ENCODE measurements at regions of chr2 and their contacts with region 1.

Region 1: GRCh38 chr2:240434728-240435456 is 571 bp upstream of the GPC1 start:
- DNase-seq: peak; percentile 90 to 91
- ATAC-seq: peak; percentile 39 to 51
- H3K4me3 ChIP-seq: peak overlapping the region; percentile 90
- H3K27ac ChIP-seq: peak overlapping the region; percentile 97 to 99
- H3K4me1 ChIP-seq: peaks cover 48% of the 10 kb centered on the region
- CTCF ChIP-seq: no peak
- EP300 ChIP-seq: peak in 1 of 2 experiments; percentile 31; a peak in 1 of 5 replicates
- POLR2A ChIP-seq: peak; percentile 60
- RAD21 ChIP-seq: 0 out of 5 replicates have a peak, but pooled peaks of 1 of the 2 experiments have one; percentile 11

Region 2: GRCh38 chr2:240149943-240150784 is 284.7 kb before region 1 on chr2:
- CTCF ChIA-PET with region 1: interaction called, 12 read pairs
- POLR2A ChIA-PET with region 1: no interaction called
- DNase-seq: peak; percentile 47 to 71
- ATAC-seq: peak; percentile 65 to 86
- H3K4me3 ChIP-seq: no peak overlapping the region
- H3K27ac ChIP-seq: no peak overlapping the region
- H3K4me1 ChIP-seq: no peaks in the 10 kb centered on the region
- CTCF ChIP-seq: peak; percentile 69
- EP300 ChIP-seq: no peak
- POLR2A ChIP-seq: no peak
- RAD21 ChIP-seq: peak; percentile 73 to 75

Region 3: DNA sequence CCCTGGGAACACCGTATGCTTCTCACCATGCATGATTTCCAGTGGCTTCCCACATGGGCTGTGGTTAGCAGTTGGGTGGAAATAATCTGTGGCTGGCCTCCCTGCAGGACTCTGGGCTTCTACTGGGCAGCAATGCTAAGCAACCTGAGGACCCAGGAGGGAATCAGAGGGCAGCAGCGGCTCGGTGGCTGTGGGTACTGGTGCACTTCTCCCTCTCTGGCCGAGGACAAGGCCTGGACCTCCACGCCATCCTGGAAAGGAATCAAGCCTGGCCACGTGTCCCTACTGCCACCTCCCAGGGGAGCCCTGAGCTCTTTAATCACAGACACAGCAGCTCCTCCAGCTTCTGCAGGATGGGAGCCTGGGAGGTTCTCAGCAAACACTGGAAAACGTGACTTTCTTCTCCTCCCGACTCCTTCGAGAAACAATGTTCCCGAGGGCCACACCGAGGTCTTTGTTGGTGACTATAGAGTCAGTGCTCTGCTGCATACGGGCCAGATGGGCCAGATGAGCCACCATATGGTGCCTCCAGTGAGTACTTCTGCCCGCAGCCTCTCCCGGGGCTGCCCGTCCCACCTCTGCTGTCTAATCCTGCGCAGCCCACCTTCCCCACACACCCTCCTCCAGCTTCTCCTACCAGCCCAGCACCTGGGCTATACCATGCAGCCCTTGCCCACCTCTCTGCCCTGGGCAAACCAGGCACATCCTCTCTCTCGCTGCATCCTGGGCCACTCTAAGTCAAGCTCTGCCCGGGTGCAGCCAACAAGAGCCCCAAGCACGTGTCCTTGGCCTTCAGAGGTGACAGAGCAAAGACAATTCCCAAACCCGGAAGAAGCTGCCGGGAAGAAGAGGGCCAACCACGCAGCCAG is 251.7 kb before region 1 on chr2:
- CTCF ChIA-PET with region 1: no interaction called
- POLR2A ChIA-PET with region 1: no interaction called
- DNase-seq: no peak
- ATAC-seq: no peak
- H3K4me3 ChIP-seq: no peak overlapping the region
- H3K27ac ChIP-seq: no peak overlapping the region
- H3K4me1 ChIP-seq: no peaks in the 10 kb centered on the region
- CTCF ChIP-seq: no peak
- EP300 ChIP-seq: no peak
- POLR2A ChIP-seq: no peak
- RAD21 ChIP-seq: no peak

Region 4: GRCh38 chr2:240369801-240370585 is 64.9 kb before region 1 on chr2:
- CTCF ChIA-PET with region 1: interaction called, 10 read pairs
- POLR2A ChIA-PET with region 1: interaction called, 22 read pairs
- DNase-seq: peak; percentile 95
- ATAC-seq: peak; percentile 77 to 84
- H3K4me3 ChIP-seq: no peak overlapping the region
- H3K27ac ChIP-seq: peak overlapping the region; percentile 92 to 97
- H3K4me1 ChIP-seq: peaks cover 68% of the 10 kb centered on the region
- CTCF ChIP-seq: peak; percentile 12; the same call in 1 of the 3 replicates
- EP300 ChIP-seq: peak; percentile 43 to 69; a peak in 2 of 5 replicates
- POLR2A ChIP-seq: peak; percentile 8; the same call in 1 of the 2 replicates
- RAD21 ChIP-seq: peak in 1 of 2 experiments; percentile 40; a peak in 2 of 5 replicates

Region 5: GRCh38 chr2:240387669-240388358 is 47.1 kb before region 1 on chr2:
- CTCF ChIA-PET with region 1: interaction called, 15 read pairs
- POLR2A ChIA-PET with region 1: interaction called, 9 read pairs
- DNase-seq: peak; percentile 90 to 96
- ATAC-seq: peak; percentile 70 to 81
- H3K4me3 ChIP-seq: peak overlapping the region; percentile 39
- H3K27ac ChIP-seq: peak overlapping the region; percentile 99 to 100
- H3K4me1 ChIP-seq: peaks cover 45% of the 10 kb centered on the region
- CTCF ChIP-seq: no peak
- EP300 ChIP-seq: peak; percentile 62 to 77; a peak in 3 of 5 replicates
- POLR2A ChIP-seq: no peak
- RAD21 ChIP-seq: peak in 1 of 2 experiments; percentile 31; a peak in 2 of 5 replicates

Region 6: DNA sequence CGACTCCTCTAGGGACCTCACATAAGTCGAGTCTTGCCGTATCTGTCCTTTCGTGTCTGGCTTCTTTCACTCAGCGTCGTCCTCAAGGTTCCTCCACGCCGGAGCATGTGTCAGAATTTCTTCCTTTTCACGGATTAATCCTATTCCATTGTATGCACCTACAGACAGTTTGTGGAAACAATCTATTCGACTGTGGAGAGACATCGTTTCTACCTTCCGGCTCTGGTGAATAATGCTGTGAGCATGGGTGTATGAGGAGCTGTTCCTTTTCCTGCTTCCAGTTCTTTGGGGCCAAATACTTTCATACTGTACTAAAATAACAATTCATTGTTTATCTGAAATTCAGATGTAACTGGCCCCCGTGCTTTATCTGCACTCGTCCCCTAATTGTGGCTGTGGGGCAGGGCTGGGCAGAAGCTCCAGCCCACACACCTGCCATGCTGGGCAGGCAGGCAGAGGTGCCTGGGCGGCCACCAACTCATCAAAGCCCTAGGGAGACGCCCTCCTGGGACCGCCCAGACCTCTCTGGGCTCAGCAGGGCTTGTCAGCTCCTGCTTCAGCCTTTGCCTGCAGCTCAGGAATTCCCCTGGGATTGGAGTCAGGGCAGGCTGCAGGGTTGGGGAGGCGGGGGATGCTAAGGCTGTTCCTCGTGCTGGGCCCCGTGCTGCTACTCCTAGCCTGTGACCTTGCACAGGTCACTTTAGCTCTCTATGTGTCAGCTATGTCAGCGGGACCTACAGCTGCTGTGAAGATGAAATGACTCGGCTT is 15.1 kb after region 1 on chr2:
- CTCF ChIA-PET with region 1: interaction called, 29 read pairs
- POLR2A ChIA-PET with region 1: no interaction called
- DNase-seq: peak in 1 of 2 experiments; percentile 50
- ATAC-seq: peak; percentile 2 to 38; a peak in 4 of 6 replicates
- H3K4me3 ChIP-seq: no peak overlapping the region
- H3K27ac ChIP-seq: peak overlapping the region in 1 of 2 experiments; percentile 92; a peak in 3 of 6 replicates
- H3K4me1 ChIP-seq: peaks cover 50% of the 10 kb centered on the region
- CTCF ChIP-seq: no peak
- EP300 ChIP-seq: no peak
- POLR2A ChIP-seq: no peak
- RAD21 ChIP-seq: no peak

Measured in A549 (cell line).